Posterior cingulate gyrus (tissue), 11 donors: ENCODE measurements at regions of chr20 and their contacts with region 1.

Region 1: DNA sequence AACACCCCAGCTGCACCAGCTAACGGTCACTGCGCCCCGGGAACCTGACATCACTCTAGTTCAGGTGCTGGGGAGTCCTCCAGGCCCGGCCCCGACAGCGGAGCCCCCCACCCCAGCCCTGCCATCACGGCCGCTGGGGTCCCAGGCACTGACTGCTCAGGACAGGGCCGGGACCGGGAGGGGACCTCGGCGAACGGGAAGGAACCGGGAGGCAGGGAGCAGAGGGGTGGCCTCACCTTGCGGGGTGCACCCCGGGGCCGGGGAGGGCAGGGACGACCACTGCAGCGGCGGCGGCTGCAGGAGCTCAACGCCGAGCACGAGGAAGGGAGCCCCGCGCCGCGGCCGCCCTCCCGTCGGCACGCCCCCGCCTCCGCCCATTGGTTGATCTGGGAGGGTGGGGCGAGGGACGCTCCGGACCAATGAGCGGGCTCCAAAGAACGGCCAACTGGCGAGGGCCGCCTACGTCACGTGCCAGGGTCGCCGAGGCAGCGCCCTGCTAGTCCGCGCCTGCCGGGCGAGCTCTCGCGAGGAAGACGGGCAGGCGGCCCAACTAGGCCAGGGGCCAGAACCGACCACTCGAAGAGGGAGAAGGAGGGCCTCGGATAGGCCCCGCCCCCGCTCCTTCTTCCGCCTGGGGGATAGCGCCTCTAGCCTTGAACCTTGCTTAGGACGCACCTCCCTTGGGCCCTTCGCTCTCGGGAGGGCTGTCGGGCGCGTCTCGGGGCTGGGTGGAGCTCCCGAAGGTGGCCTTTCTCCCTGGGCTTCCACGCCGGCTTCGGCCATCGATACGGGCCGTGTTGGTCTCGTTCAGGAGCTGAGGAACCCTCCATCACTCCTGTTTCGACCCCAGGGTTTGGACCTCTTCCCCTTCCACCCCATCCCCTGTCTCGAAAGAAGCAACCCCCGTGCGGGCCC is at the start of gene ADISSP:
- DNase-seq: peak; percentile 99 to 100 (median 99)

Region 2: DNA sequence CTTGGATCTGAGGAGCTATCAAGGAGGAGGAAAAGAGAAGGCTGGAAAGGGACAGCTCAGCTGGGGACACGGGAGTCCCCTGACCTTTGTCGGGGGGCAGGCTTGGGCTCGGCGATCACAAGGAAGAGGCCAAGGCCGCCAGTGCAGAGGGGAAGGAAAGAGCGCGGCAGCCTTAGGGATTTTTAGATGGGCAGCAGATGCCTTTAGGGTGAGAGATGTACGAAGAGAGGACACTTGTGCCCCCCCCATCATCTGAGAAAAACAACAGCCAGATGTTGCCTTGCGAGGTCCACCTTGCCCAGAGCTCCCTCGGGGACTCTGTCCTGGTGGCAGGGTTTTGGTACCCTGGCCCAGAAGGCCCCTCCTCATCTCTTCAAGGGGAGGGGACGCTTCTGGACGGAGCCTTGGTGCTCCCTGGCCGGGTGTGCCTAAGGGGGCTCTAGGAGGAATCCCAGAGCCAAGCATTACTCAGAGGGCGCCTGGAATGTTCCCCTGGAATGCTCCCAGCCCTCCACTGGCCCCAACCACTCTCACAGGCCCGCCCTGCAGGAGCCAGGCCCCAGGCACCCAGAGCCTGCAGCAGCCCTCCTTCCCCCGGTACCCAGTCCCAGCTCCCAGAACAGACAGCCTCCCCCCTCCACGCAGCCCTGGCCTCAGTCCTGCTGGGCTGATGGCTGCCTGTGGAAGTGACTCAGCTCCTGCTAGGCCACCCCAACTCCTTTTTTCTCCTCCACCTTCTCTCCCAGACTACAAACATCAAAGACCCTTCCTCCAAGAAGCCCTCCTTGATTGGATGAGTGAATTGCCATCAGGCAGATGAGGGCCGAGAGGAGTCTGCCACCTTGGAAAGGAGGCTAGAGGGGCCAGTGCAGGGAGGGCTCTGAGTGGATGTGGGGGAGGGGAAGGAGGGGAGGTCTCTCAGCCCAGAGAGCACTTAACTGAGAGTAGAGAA is 87.7 kb before region 1 on chr20:
- intact Hi-C with region 1: loop called (anchors 5 kb)
- DNase-seq: peak in 1 of 10 donors; percentile 72

Region 3: GRCh38 chr20:3781153-3781910 is 13.6 kb after region 1 on chr20 and contains the start of gene SPEF1:
- intact Hi-C with region 1: loop called (anchors 1 kb)
- DNase-seq: peak; percentile 62 to 95 (median 78)